ENCODE measurements at regions of chr17 and their contacts with region 1.

Region 1: GRCh38 chr17:35088881-35089585 is 25.5 kb upstream of the RFFL start:
- DNase-seq: peak; percentile 92
- H3K4me3 Mint-ChIP-seq: peak overlapping the region; percentile 93
- H3K27ac Mint-ChIP-seq: peak overlapping the region; percentile 90
- H3K4me1 Mint-ChIP-seq: peaks cover 20% of the 10 kb centered on the region
- H3K27me3 Mint-ChIP-seq: no peaks in the 10 kb centered on the region
- CTCF ChIP-seq: peak; percentile 78

Region 2: GRCh38 chr17:34998205-34998604 is 90.8 kb before region 1 on chr17:
- CTCF ChIA-PET with region 1: interaction called, 3 read pairs
- intact Hi-C with region 1: loop called (anchors 1 kb)
- DNase-seq: peak; percentile 82
- H3K4me3 Mint-ChIP-seq: no peak overlapping the region
- H3K27ac Mint-ChIP-seq: no peak overlapping the region
- H3K4me1 Mint-ChIP-seq: no peaks in the 10 kb centered on the region
- H3K27me3 Mint-ChIP-seq: no peaks in the 10 kb centered on the region
- CTCF ChIP-seq: peak; percentile 77

Region 3: GRCh38 chr17:35018814-35019213 is 70.2 kb before region 1 on chr17:
- CTCF ChIA-PET with region 1: interaction called, 7 read pairs
- intact Hi-C with region 1: loop called (anchors 5 kb)
- DNase-seq: peak; percentile 41
- H3K4me3 Mint-ChIP-seq: peak overlapping the region; percentile 21
- H3K27ac Mint-ChIP-seq: peak overlapping the region; percentile 77
- H3K4me1 Mint-ChIP-seq: peaks cover 21% of the 10 kb centered on the region
- H3K27me3 Mint-ChIP-seq: no peaks in the 10 kb centered on the region
- CTCF ChIP-seq: no peak

Region 4: DNA sequence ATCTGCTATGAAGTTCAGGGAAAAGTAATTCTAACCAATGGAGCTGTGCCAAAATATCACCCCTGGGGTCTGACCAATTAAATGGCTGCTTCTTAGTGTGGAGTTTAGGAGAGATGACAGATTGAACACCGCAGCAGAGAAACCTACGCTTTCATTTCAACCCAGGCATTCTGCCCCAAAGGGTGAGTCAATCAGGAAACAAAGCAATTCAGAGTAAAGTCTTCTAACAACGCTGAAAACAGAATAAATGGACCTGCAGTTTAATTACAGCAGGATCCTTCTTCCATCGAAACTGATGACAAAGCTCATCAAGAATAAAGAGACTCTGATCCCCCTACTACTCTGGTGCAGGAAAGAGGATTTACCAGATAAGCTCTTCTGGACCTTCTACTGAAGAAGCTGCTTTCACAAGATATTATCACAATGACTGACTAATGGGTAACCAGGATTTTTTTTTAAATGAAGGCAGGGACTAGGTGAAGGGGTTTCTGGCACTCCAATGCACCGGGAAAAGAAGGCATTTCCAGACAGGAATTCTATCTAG is 42.2 kb before region 1 on chr17:
- CTCF ChIA-PET with region 1: interaction called, 3 read pairs
- intact Hi-C with region 1: loop called (anchors 2 kb)
- DNase-seq: peak; percentile 43
- H3K4me3 Mint-ChIP-seq: peak overlapping the region; percentile 61
- H3K27ac Mint-ChIP-seq: peak overlapping the region; percentile 92
- H3K4me1 Mint-ChIP-seq: peaks cover 49% of the 10 kb centered on the region
- H3K27me3 Mint-ChIP-seq: no peaks in the 10 kb centered on the region
- CTCF ChIP-seq: no peak

Region 5: DNA sequence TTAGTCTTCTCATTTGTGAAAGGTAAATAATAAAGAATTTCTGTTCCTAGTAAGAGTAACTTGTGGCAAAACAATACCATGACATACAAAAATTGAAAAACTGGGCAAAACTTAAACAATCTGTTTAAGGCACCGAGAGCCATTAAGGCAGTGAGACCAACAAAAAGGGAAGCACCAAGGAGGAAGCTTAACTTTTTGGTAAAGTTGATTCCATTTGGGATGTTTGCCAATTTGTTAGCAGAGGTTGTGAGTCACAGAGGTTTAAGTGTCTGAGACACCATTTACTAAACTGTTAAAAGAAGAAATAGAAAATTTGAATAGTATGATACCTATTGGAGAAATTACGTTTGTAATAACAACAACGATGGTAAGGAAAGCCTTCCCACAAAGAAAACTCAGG is 100.3 kb after region 1 on chr17:
- CTCF ChIA-PET with region 1: no interaction called
- intact Hi-C with region 1: no loop called
- DNase-seq: no peak
- H3K4me3 Mint-ChIP-seq: no peak overlapping the region
- H3K27ac Mint-ChIP-seq: no peak overlapping the region
- H3K4me1 Mint-ChIP-seq: no peaks in the 10 kb centered on the region
- H3K27me3 Mint-ChIP-seq: peaks cover 75% of the 10 kb centered on the region
- CTCF ChIP-seq: no peak

Measured in Calu3 (cell line).